ENCODE measurements at regions of chr6 and their contacts with region 1.

Region 1: GRCh38 chr6:16769131-16769985 is 8.1 kb upstream of the ATXN1 start:
- DNase-seq: peak; percentile 96
- ATAC-seq: peak; percentile 51
- H3K4me3 ChIP-seq: peak overlapping the region; percentile 38
- H3K27ac ChIP-seq: peak overlapping the region; percentile 86
- H3K4me1 ChIP-seq: peaks cover 63% of the 10 kb centered on the region
- H3K27me3 ChIP-seq: no peaks in the 10 kb centered on the region
- CTCF ChIP-seq: peak; percentile 23; the same call in 1 of the 2 replicates

Region 2: DNA sequence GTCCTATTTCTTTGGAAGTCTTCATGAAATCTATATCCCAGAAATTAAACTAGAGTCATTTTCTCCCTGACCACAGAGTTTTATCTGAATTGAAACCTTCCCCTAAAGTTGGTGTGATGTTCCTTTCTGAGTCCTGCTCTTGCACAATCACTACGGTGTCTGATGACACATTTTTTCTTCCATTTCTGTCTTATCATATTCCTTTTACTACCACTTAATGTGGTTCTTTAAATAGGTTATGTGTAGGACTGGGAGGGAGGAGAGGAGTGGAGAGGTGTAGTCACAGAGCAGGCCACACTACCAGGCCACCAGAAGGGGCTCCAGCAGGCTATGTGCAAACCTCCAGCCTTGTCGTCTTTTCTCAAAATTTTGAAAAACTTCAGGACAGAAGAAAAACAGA is 31.6 kb after region 1 on chr6:
- CTCF ChIA-PET with region 1: no interaction called
- POLR2A ChIA-PET with region 1: no interaction called
- intact Hi-C with region 1: loop called (anchors 2 kb)
- DNase-seq: peak; percentile 62
- ATAC-seq: no peak
- H3K4me3 ChIP-seq: no peak overlapping the region
- H3K27ac ChIP-seq: peak overlapping the region; percentile 60
- H3K4me1 ChIP-seq: peaks cover 41% of the 10 kb centered on the region
- H3K27me3 ChIP-seq: no peaks in the 10 kb centered on the region
- CTCF ChIP-seq: peak; percentile 27

Region 3: DNA sequence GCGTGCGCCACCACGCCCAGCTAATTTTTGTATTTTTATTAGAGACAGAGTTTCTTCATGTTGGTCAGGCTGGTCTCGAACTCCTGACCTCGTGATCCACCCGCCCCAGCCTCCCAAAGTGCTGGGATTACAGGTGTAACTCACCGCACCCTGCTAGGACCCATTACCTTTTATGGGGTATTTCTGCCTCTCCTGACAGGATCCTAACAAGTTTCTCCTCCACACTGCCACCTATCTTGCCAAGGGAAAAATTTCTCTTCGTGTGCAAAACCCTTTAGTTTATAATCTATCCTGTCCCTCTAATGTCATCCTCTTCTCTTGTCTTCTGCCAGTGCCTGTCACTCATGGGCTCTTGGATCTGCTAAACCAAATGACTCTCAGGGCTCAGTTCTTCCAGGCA is 334.4 kb after region 1 on chr6:
- CTCF ChIA-PET with region 1: interaction called, 15 read pairs
- POLR2A ChIA-PET with region 1: no interaction called
- intact Hi-C with region 1: no loop called
- DNase-seq: peak; percentile 39
- ATAC-seq: no peak; the same call in 1 of the 2 replicates
- H3K4me3 ChIP-seq: no peak overlapping the region
- H3K27ac ChIP-seq: no peak overlapping the region
- H3K4me1 ChIP-seq: peaks cover 3% of the 10 kb centered on the region
- H3K27me3 ChIP-seq: no peaks in the 10 kb centered on the region
- CTCF ChIP-seq: peak; percentile 46